ENCODE measurements at regions of chr12 and their contacts with region 1.

Region 1: GRCh38 chr12:91985002-91985787 is 160.5 kb downstream of the BTG1 start:
- DNase-seq: no peak
- H3K4me3 ChIP-seq: no peak overlapping the region
- H3K27ac ChIP-seq: peak overlapping the region; percentile 62 to 64
- H3K4me1 ChIP-seq: peaks cover 8 to 19% of the 10 kb centered on the region in 2 donors
- H3K27me3 ChIP-seq: no peaks in the 10 kb centered on the region
- CTCF ChIP-seq: no peak

Region 2: GRCh38 chr12:91854725-91855124 is 130.5 kb before region 1 on chr12:
- intact Hi-C with region 1: loop called (anchors 5 kb)
- DNase-seq: no peak
- H3K4me3 ChIP-seq: no peak overlapping the region
- H3K27ac ChIP-seq: peak overlapping the region in 1 of 2 donors; percentile 34
- H3K4me1 ChIP-seq: no peaks in the 10 kb centered on the region
- H3K27me3 ChIP-seq: no peaks in the 10 kb centered on the region
- CTCF ChIP-seq: no peak

Region 3: DNA sequence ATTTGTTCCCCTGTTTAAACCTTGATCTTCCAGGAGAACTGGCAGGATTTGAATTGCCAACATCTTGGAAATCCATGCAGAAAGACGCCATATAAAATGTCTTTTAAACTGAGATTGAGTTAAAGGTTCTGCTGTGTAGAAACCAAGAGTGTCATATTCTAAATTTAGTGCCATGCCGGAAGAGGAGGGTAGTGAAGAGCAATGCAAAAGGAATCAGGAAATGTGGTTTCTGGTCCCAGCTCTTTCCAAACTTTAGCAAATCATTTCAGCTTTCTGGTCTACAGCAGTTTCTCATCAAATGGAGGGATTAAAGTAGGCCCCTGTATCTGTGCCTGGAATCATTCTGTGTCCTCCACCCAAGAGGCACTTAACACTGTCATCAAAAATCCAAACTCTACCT is 74.8 kb after region 1 on chr12:
- intact Hi-C with region 1: loop called (anchors 5 kb)
- DNase-seq: no peak
- H3K4me3 ChIP-seq: peak overlapping the region in 1 of 2 donors; percentile 31
- H3K27ac ChIP-seq: peak overlapping the region; percentile 57 to 74
- H3K4me1 ChIP-seq: peaks cover 4 to 12% of the 10 kb centered on the region in 2 donors
- H3K27me3 ChIP-seq: no peaks in the 10 kb centered on the region
- CTCF ChIP-seq: no peak

Measured in ascending aorta (tissue), 2 donors.